Heart right ventricle (tissue), 16 donors: ENCODE measurements at regions of chr13 and their contacts with region 1.

Region 1: GRCh38 chr13:31663880-31664585 is 75.3 kb upstream of the RXFP2 start:
- DNase-seq: no peak
- ATAC-seq: no peak
- H3K4me3 ChIP-seq: no peak overlapping the region
- H3K27ac ChIP-seq: no peak overlapping the region
- H3K4me1 ChIP-seq: no peaks in the 10 kb centered on the region
- H3K27me3 ChIP-seq: no peaks in the 10 kb centered on the region
- CTCF ChIP-seq: no peak

Region 2: DNA sequence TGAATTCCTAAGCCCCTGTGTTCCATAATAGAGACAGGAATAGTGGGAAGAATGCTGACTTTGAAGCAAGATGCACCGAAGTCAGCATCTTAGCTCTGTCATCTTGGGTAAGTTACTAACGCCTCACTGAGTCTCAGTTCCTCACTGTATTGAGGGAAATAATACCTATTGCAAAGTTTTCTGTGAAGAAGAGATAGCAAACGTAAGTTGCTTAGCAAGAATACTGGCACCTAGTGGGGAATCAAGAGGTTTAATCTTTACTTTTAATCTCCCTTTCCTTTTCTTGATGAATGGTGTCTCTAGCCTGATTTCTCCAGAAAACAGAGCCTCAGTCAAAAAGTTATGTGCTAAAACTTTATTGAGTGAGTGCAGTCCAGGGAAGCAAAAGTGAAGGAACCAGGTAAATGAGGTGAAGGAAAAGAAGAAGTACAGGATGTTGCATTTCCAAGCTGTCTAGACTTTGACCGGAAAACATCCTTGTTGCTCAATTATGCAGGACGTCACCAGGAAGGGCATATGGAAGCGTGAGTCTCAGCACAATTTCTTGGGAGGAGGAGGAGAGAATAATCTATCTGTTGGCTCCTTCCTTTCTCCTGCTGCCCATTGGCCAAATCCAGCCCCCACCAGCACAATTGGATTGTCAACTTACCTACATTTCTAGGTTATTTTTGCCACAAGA is 254.2 kb before region 1 on chr13:
- intact Hi-C with region 1: no loop called
- DNase-seq: no peak
- ATAC-seq: no peak
- H3K4me3 ChIP-seq: no peak overlapping the region
- H3K27ac ChIP-seq: no peak overlapping the region
- H3K4me1 ChIP-seq: no peaks in the 10 kb centered on the region
- H3K27me3 ChIP-seq: peaks cover 0 to 8% (median 0%) of the 10 kb centered on the region in 7 donors
- CTCF ChIP-seq: peak in 3 of 9 donors; percentile 7 to 9 (median 8)

Region 3: GRCh38 chr13:31556376-31556775 is 107.7 kb before region 1 on chr13:
- intact Hi-C with region 1: loop called in 1 of 10 experiments (anchors 10 kb)
- DNase-seq: no peak
- ATAC-seq: no peak
- H3K4me3 ChIP-seq: no peak overlapping the region
- H3K27ac ChIP-seq: no peak overlapping the region
- H3K4me1 ChIP-seq: no peaks in the 10 kb centered on the region
- H3K27me3 ChIP-seq: no peaks in the 10 kb centered on the region
- CTCF ChIP-seq: no peak

Region 4: DNA sequence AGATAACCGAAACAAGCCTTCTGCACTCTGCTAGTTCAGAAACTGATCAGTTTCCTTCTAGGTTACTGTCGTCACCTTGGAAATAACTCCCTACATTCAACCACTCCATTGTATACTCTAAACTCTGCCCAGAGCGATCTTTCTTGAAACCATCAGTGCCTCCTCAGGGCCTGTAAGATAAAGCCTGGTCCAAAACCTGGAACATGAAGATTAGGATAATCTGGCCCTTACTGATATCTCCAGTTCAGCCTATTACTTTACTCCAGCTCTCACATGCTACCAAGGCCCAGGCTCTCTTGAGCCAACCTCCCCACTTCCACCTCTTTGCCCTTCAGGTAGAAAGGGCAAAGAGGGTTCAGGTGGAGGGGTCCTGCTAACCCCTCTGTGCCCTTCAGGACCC is 50.0 kb before region 1 on chr13:
- intact Hi-C with region 1: no loop called
- DNase-seq: no peak
- ATAC-seq: no peak
- H3K4me3 ChIP-seq: no peak overlapping the region
- H3K27ac ChIP-seq: no peak overlapping the region
- H3K4me1 ChIP-seq: no peaks in the 10 kb centered on the region
- H3K27me3 ChIP-seq: no peaks in the 10 kb centered on the region
- CTCF ChIP-seq: no peak

Region 5: DNA sequence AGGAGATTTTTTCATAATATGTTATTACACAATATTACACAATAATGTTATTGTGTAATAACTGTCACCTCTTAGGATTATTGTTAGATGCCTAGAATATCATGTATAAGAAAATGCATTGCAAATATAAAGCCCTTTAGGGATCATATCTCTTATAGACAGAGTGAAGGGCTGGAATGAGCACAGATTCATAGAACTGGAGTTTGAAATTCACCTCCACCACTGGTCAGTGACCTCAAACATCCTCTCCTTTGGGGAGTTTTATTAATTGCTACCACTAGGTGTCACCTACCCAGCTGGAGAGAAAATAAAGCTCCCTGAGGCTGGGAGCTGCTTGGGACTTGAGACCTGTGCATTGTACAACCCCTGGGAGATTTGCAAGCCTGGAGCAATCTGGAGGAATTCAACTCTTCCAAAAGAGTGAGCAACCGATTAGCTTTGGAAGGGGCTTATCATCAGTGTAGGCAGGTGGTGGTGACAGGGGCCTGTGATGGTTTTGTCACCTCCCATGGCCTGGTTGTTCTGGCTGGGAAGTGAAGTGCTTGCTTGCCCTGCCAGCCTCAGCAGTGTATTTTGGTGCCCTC is 337.2 kb after region 1 on chr13:
- intact Hi-C with region 1: no loop called
- DNase-seq: peak; percentile 24 to 58
- ATAC-seq: peak; percentile 71 to 95 (median 90)
- H3K4me3 ChIP-seq: no peak overlapping the region
- H3K27ac ChIP-seq: peak overlapping the region in 7 of 10 donors; percentile 6 to 47 (median 34)
- H3K4me1 ChIP-seq: peaks cover 3 to 59% (median 30%) of the 10 kb centered on the region in 9 donors
- H3K27me3 ChIP-seq: no peaks in the 10 kb centered on the region
- CTCF ChIP-seq: peak in 8 of 9 donors; percentile 38 to 71 (median 61)